Activated naive CD4-positive, alpha-beta T cell treated with anti-CD3 and anti-CD28 coated beads for 36 hours (primary cell): ENCODE measurements at regions of chrX and their contacts with region 1.

Region 1: DNA sequence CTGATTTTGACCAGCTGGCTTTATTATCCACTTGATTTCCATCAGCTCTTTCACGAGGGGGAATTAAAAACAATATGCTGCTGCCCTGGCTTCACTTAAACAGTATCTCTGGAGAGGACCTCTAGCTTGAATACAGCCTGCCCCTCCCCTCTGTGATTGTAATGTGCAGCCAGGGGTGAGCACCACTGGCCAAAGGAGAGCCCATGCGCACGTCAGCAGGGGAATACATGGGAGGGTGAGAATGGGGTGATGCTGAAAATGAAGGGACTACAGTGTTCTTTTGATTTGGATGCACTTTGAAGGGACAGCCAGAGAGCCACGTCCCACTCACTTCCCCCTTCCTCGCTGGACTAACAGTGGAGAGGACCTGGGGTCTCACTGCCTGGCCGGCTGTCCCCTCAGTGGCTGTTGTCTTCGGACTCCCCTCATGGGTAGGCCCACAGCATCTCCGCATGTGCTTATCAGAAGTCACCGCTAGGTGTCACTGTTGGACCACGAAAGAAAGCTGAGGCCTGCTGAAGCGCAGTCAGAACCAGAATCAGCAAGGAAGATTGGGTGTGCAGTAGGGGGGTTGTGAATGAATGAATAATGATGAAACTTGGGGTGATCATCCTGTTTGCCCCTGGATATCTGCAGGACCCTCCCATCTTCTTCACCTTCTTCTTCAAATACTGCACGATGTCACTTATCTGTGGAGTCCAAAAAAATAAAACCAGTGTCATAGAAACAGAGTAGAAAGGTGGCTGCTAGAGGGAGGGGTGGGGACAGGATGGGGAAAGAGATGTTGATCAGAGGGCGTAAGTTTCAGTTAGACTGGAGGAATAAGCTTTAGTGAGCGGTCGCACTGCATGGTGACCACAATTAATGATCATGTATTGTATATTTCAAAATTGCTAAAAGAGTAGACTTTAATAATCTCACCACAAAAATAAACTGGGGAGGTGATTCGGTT is 32.8 kb downstream of the CLCN4 start:
- DNase-seq: peak; percentile 75
- H3K4me3 Mint-ChIP-seq: no peak overlapping the region
- H3K27ac Mint-ChIP-seq: no peak overlapping the region
- H3K4me1 Mint-ChIP-seq: no peaks in the 10 kb centered on the region
- H3K27me3 Mint-ChIP-seq: no peaks in the 10 kb centered on the region

Region 2: DNA sequence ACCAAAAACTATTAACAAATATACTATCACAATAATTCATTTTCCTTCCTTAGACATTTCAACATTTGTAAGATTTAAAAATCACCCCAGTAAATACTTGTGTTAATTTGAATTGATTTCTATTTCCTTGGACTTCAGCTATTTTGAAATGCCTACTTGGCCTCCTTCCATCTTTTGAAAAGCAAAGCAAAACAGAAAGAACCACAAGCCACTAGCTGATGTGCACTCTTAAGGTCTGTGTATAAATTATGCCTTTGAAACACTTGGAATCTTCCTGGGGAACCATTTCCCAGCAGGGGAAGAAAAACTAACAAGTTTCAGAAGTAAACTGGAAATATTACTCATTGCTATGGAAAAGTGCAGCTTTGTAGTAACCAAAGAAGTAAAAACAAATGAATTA is 107.0 kb after region 1 on chrX:
- CTCF ChIA-PET with region 1: no interaction called
- intact Hi-C with region 1: no loop called
- DNase-seq: no peak
- H3K4me3 Mint-ChIP-seq: no peak overlapping the region
- H3K27ac Mint-ChIP-seq: no peak overlapping the region
- H3K4me1 Mint-ChIP-seq: no peaks in the 10 kb centered on the region
- H3K27me3 Mint-ChIP-seq: no peaks in the 10 kb centered on the region

Region 3: DNA sequence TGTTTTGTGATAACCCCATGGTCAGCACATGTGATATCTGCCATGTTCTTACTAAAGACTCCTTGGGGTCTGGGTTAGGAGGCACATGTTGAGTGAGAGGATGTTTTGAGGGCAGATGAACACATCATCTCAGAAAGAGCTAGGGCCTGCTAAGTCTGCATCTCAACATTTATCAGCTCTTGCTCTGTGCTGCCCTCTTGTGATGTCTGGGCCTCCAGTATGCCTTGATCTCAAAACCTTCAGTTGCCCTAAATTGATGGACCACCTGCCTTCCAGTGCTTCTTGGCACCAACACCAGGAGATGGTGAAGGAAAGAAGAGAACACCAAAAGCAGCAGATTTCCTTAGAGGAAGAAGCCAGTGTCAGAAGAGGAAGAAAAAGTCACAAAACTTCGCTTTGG is 408.3 kb after region 1 on chrX:
- CTCF ChIA-PET with region 1: interaction called, 12 read pairs
- intact Hi-C with region 1: no loop called
- DNase-seq: peak; percentile 8
- H3K4me3 Mint-ChIP-seq: no peak overlapping the region
- H3K27ac Mint-ChIP-seq: no peak overlapping the region
- H3K4me1 Mint-ChIP-seq: no peaks in the 10 kb centered on the region
- H3K27me3 Mint-ChIP-seq: no peaks in the 10 kb centered on the region

Region 4: GRCh38 chrX:10615931-10616775 is 426.6 kb after region 1 on chrX:
- CTCF ChIA-PET with region 1: no interaction called
- intact Hi-C with region 1: loop called (anchors 1 kb)
- DNase-seq: peak; percentile 13
- H3K4me3 Mint-ChIP-seq: no peak overlapping the region
- H3K27ac Mint-ChIP-seq: no peak overlapping the region
- H3K4me1 Mint-ChIP-seq: peaks cover 6% of the 10 kb centered on the region
- H3K27me3 Mint-ChIP-seq: peaks cover 27% of the 10 kb centered on the region

Region 5: DNA sequence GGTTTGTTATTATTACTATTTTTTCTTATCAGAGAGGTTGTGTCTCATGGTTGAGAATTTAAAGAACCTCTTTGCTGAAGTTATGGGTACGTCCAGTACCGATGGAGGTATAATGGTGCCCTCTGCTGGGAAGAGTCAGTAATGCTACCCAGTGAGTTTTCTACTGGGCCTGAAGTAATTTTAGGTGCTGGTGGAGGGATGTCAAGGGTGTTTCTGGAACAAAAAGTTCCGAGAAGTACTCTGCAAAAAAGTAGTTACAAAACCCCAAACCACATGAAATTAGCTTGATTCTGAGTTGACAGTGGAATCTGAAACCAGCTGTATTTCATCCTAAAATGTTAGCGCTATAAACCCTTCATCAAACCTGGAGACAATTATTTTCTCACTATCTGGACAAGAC is 533.3 kb after region 1 on chrX:
- CTCF ChIA-PET with region 1: interaction called, 7 read pairs
- intact Hi-C with region 1: loop called (anchors 1 kb)
- DNase-seq: peak; percentile 54
- H3K4me3 Mint-ChIP-seq: no peak overlapping the region
- H3K27ac Mint-ChIP-seq: no peak overlapping the region
- H3K4me1 Mint-ChIP-seq: no peaks in the 10 kb centered on the region
- H3K27me3 Mint-ChIP-seq: no peaks in the 10 kb centered on the region

Region 6: GRCh38 chrX:10769195-10769594 is 579.6 kb after region 1 on chrX:
- CTCF ChIA-PET with region 1: no interaction called
- intact Hi-C with region 1: loop called (anchors 1 kb)
- DNase-seq: no peak
- H3K4me3 Mint-ChIP-seq: no peak overlapping the region
- H3K27ac Mint-ChIP-seq: no peak overlapping the region
- H3K4me1 Mint-ChIP-seq: no peaks in the 10 kb centered on the region
- H3K27me3 Mint-ChIP-seq: no peaks in the 10 kb centered on the region

Region 7: GRCh38 chrX:11137543-11138139 is 948.0 kb after region 1 on chrX:
- CTCF ChIA-PET with region 1: interaction called, 16 read pairs
- intact Hi-C with region 1: loop called (anchors 1 kb)
- DNase-seq: no peak
- H3K4me3 Mint-ChIP-seq: no peak overlapping the region
- H3K27ac Mint-ChIP-seq: no peak overlapping the region
- H3K4me1 Mint-ChIP-seq: peaks cover 2% of the 10 kb centered on the region
- H3K27me3 Mint-ChIP-seq: peaks cover 5% of the 10 kb centered on the region

Region 8: GRCh38 chrX:11787564-11787963 is 1598.0 kb after region 1 on chrX:
- CTCF ChIA-PET with region 1: no interaction called
- intact Hi-C with region 1: no loop called
- DNase-seq: peak; percentile 89
- H3K4me3 Mint-ChIP-seq: peak overlapping the region; percentile 56
- H3K27ac Mint-ChIP-seq: peak overlapping the region; percentile 30
- H3K4me1 Mint-ChIP-seq: peaks cover 37% of the 10 kb centered on the region
- H3K27me3 Mint-ChIP-seq: no peaks in the 10 kb centered on the region